Activated naive CD4-positive, alpha-beta T cell treated with anti-CD3 and anti-CD28 coated beads for 36 hours (primary cell): ENCODE measurements at regions of chrX and their contacts with region 1.

Region 1: DNA sequence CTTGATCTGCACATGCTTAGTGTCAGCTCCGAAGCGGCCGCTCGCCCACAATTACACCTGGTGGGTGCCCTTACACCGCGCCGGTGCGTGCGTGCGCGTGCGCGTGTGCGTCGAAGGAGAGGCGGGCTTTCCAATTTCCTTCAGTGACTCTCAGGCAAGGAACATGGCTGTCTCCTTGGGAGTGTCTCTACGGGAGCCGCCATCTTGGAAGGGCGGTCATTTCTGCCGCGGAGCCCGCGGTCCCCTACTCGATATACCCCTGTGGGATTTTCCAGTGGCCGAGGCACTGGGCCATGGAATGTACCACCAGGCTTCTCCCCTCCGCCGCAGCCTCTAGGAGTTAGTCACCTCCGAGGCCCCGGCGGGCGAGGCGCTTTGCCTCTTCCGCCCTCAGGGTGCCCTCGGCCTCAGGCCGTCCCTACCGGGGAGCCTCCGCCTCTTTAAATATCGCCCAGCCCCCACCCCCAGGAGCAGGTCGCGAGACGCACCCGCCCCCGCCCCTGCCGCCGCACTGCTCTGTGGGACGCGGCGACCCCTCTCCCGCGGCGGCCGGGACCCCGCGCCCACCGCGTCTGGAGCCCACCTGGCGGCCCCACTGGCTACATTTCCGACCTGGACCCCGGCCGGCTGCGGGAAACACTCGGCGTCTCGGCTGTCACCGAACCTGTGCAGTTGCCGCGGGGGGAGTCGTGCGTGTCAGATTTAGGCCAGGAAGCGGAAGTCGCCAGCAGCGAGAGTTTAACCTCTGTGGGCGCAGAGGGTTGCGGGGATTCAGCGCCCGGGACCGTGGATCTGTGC is at the start of gene ZNF41:
- DNase-seq: peak; percentile 75
- H3K4me3 Mint-ChIP-seq: peak within 1 kb of the TSS; percentile 94
- H3K27ac Mint-ChIP-seq: peak within 1 kb of the TSS; percentile 96
- H3K4me1 Mint-ChIP-seq: peaks cover 32% of the 10 kb centered on the region
- H3K27me3 Mint-ChIP-seq: no peaks in the 10 kb centered on the region
- total RNA-seq, gene ZNF41: 4.6 to 6.4 TPM

Region 2: DNA sequence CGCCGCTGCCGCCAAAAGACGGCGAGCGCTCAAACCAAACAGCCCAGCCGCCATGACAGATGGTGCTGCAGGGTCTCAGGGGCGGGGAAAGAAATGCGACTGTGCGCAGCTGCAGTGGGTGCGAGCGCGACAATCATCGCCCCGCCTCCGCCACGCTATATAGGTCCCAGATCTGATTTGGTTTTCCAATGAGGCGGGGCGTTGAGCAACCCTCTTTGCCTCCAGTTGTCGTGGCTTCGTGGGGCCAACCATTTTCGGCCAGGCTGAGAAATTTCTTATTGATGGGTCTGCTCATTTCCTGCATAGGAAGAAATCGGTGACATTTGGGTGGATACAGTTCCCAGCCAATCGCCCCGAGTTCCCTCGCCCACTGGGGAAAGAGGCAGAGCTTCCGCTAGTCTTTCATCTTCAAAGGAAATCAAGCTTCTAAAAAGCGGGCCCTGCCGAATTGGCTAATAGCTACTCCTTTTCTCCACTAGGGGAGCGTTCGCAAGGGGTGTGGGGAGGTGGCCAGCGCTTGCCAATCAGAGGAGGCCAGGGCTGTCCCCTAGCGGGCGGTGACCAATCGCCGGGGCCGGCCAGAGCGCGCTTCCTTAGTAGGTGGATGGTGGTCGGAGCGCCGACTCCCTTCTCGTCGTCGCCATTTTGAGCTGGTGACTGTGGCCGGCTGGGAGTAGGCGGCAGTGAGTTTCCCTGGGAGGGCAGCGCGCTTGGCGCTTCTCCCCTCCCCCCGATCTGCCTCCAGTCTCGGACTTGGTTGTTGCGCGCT is 337.9 kb before region 1 on chrX and contains the starts of genes NDUFB11 and RBM10:
- CTCF ChIA-PET with region 1: no interaction called
- intact Hi-C with region 1: loop called (anchors 5 kb)
- DNase-seq: peak; percentile 94
- H3K4me3 Mint-ChIP-seq: peak within 1 kb of the TSS; percentile 97
- H3K27ac Mint-ChIP-seq: peak within 1 kb of the TSS; percentile 99
- H3K4me1 Mint-ChIP-seq: peaks cover 35% of the 10 kb centered on the region
- H3K27me3 Mint-ChIP-seq: no peaks in the 10 kb centered on the region
- total RNA-seq, gene NDUFB11: 85.8 to 87.2 TPM
- total RNA-seq, gene RBM10: 65.4 to 65.5 TPM

Region 3: DNA sequence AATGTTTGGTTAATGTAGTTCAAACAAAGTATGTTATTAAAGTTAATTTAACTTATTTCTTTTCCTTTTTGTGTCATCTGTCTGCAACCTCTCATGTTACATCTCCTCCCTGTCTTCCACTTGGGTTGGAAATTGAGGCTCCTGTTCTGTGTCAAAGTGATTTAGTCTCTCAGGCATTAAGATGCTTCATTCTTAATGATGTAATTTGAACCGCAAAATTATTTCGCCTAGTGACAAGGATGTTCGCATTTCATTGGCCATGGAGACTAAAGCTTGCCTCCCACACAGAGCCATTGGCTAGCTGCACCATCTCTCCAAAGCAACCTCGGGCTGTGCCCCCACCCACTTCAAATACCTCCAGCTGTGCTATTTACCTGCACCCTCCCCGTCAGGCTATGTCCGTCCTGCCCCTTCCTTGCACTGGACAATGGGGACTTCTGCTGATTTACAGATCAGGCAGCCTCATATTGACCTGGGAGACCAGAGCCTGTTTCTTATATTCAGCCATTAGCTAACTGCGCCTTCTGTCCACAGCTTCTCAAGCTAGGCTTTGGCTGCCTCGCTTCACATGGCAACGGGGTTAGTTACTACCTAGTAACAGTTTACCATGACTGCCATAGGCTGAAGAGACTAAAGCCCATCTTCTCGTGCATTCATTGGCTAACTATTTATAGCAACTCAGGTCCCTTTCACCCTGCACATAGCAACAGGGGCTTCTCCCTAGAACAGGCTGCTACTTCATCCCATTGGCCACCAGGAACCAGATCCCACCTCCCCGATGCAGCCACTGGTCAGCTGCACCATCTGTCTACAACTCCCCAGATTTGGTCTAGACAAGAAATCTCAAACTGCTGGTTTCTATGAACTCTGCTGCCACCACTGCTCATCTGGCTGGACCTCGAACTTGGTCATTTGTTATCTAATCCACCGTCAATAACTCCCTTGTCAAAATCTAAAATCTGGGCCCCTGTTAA is 120.9 kb before region 1 on chrX:
- CTCF ChIA-PET with region 1: no interaction called
- intact Hi-C with region 1: loop called (anchors 5 kb)
- DNase-seq: peak; percentile 18
- H3K4me3 Mint-ChIP-seq: no peak overlapping the region
- H3K27ac Mint-ChIP-seq: no peak overlapping the region
- H3K4me1 Mint-ChIP-seq: peaks cover 20% of the 10 kb centered on the region
- H3K27me3 Mint-ChIP-seq: no peaks in the 10 kb centered on the region

Region 4: DNA sequence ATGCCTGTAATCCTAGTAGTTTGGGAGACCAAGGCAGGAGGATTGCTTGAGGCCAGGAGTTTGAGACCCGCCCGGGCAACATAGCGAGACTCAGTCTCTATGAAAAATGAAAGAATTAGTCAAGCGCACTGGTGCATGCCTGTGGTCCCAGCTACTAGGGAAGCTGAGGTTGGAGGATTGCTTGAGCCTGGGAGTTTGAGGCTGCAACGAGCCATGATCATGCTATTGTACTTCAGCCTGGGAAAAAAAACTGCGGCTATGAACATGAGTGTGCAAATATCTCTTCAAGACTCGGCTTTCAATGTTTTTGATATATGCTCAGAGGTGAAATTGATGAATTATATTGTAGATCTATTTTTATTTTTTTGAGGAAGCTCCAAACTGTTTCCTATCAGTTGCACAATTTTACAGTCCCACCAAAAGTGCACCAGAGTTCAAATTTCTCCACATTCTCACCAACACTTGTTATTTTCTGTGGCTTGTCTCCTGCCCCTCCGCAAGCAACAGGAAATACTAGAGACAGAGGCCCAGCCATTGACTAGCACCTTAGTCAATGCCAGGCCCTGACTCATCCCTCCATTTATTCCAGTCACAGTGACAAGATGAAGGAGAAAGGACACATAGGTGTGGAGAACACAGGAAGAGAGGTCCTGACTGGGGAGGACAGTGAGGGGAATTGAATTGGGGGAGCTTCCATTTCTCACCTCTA is 33.4 kb after region 1 on chrX:
- CTCF ChIA-PET with region 1: no interaction called
- intact Hi-C with region 1: loop called (anchors 2 kb)
- DNase-seq: peak; percentile 24
- H3K4me3 Mint-ChIP-seq: no peak overlapping the region
- H3K27ac Mint-ChIP-seq: no peak overlapping the region
- H3K4me1 Mint-ChIP-seq: peaks cover 18% of the 10 kb centered on the region
- H3K27me3 Mint-ChIP-seq: no peaks in the 10 kb centered on the region

Region 5: GRCh38 chrX:47650164-47651042 is 167.7 kb after region 1 on chrX and contains the start of gene ELK1:
- CTCF ChIA-PET with region 1: no interaction called
- intact Hi-C with region 1: loop called (anchors 2 kb)
- DNase-seq: peak; percentile 93
- H3K4me3 Mint-ChIP-seq: peak within 1 kb of the TSS; percentile 88
- H3K27ac Mint-ChIP-seq: peak within 1 kb of the TSS; percentile 91
- H3K4me1 Mint-ChIP-seq: peaks cover 37% of the 10 kb centered on the region
- H3K27me3 Mint-ChIP-seq: no peaks in the 10 kb centered on the region
- total RNA-seq, gene ELK1: 58.1 to 58.8 TPM

Region 6: GRCh38 chrX:47697191-47697590 is 214.5 kb after region 1 on chrX:
- CTCF ChIA-PET with region 1: no interaction called
- intact Hi-C with region 1: no loop called
- DNase-seq: no peak
- H3K4me3 Mint-ChIP-seq: no peak overlapping the region
- H3K27ac Mint-ChIP-seq: no peak overlapping the region
- H3K4me1 Mint-ChIP-seq: no peaks in the 10 kb centered on the region
- H3K27me3 Mint-ChIP-seq: no peaks in the 10 kb centered on the region

Region 7: GRCh38 chrX:47836164-47837072 is 353.7 kb after region 1 on chrX and contains the start of gene ZNF81:
- CTCF ChIA-PET with region 1: no interaction called
- intact Hi-C with region 1: loop called (anchors 5 kb)
- DNase-seq: peak; percentile 94
- H3K4me3 Mint-ChIP-seq: peak within 1 kb of the TSS; percentile 81
- H3K27ac Mint-ChIP-seq: peak within 1 kb of the TSS; percentile 96
- H3K4me1 Mint-ChIP-seq: peaks cover 18% of the 10 kb centered on the region
- H3K27me3 Mint-ChIP-seq: no peaks in the 10 kb centered on the region
- total RNA-seq, gene ZNF81: 5.8 to 7.2 TPM

Region 8: GRCh38 chrX:48076343-48076742 is 593.6 kb after region 1 on chrX:
- CTCF ChIA-PET with region 1: no interaction called
- intact Hi-C with region 1: no loop called
- DNase-seq: no peak
- H3K4me3 Mint-ChIP-seq: no peak overlapping the region
- H3K27ac Mint-ChIP-seq: no peak overlapping the region
- H3K4me1 Mint-ChIP-seq: peaks cover 4% of the 10 kb centered on the region
- H3K27me3 Mint-ChIP-seq: no peaks in the 10 kb centered on the region